ENCODE measurements at regions of chr9 and their contacts with region 1.

Region 1: GRCh38 chr9:76704593-76705204 is 59.5 kb upstream of the PCA3 start:
- H3K4me3 ChIP-seq: no peak overlapping the region
- H3K27ac ChIP-seq: no peak overlapping the region
- H3K4me1 ChIP-seq: no peaks in the 10 kb centered on the region; the same call in 1 of the 2 replicates
- CTCF ChIP-seq: peak; percentile 47; the same call in 1 of the 2 replicates

Region 2: GRCh38 chr9:76451234-76451633 is 253.5 kb before region 1 on chr9:
- CTCF ChIA-PET with region 1: interaction called, 77 read pairs
- POLR2A ChIA-PET with region 1: no interaction called
- H3K4me3 ChIP-seq: no peak overlapping the region
- H3K27ac ChIP-seq: no peak overlapping the region
- H3K4me1 ChIP-seq: 0 out of 2 replicates have a peak, but pooled peaks cover 3% of the 10 kb centered on the region
- CTCF ChIP-seq: no peak

Region 3: GRCh38 chr9:76490249-76490990 is 214.3 kb before region 1 on chr9:
- CTCF ChIA-PET with region 1: no interaction called
- POLR2A ChIA-PET with region 1: no interaction called
- H3K4me3 ChIP-seq: no peak overlapping the region
- H3K27ac ChIP-seq: no peak overlapping the region
- H3K4me1 ChIP-seq: no peaks in the 10 kb centered on the region
- CTCF ChIP-seq: no peak

Measured in HEK293 (cell line).